T-cell (primary cell): ENCODE measurements at regions of chr2 and their contacts with region 1.

Region 1: DNA sequence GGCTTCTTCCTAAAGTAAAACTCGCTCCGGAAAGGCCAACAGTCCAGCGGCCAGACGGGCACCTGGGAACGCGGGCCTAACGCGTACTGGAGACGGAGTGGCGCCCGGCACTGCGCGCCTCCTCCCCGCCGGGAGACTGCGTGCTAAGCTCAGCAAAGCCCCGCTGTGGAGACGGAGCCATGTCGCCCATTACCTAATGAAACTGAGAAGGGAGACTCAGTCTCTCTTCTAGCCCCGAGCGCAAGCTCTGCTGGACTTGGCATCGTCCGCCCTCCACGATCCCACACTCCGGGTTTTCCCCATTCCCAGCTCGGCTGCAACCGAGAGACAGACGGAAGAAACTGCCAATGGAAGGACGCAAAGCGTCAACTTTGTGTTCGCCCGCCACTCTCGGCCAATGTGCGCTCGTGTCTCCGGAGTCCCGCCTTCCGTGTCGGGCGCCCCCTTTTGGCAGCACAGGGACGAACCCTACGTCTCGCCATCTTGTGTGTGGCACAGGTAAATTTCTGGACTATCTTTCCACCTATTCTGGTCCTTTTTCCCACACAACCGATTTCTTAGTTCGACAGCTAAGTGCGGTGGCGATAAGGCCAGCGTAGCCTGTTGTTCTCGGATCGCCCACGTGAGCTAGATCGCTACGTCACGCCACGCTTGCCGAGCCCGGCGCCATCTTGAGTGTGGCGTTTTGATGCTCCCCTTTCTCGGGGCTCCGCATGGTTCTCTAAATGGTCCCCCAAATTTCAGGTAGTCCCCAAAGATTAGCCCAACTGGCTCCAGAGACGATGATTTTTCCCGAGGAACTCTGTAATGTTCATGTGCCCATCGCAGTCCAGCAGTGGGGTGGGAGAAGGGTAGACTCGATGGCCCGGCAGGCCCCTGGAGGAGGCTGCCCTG is 1.3 kb upstream of the PTMA start:
- DNase-seq: peak; percentile 92 to 98 (median 96)
- ATAC-seq: peak; percentile 47 to 56 (median 50)
- H3K4me3 ChIP-seq: peak overlapping the region; percentile 76 to 95
- H3K4me3 Mint-ChIP-seq: peak overlapping the region; percentile 92
- H3K27ac ChIP-seq: peak overlapping the region; percentile 100
- H3K27ac Mint-ChIP-seq: peak overlapping the region; percentile 100
- H3K4me1 ChIP-seq: peaks cover 11 to 38% of the 10 kb centered on the region in 2 experiments
- H3K4me1 Mint-ChIP-seq: peaks cover 23 to 30% (median 27%) of the 10 kb centered on the region in 3 donors
- H3K27me3 ChIP-seq: no peaks in the 10 kb centered on the region
- H3K27me3 Mint-ChIP-seq: no peaks in the 10 kb centered on the region

Region 2: DNA sequence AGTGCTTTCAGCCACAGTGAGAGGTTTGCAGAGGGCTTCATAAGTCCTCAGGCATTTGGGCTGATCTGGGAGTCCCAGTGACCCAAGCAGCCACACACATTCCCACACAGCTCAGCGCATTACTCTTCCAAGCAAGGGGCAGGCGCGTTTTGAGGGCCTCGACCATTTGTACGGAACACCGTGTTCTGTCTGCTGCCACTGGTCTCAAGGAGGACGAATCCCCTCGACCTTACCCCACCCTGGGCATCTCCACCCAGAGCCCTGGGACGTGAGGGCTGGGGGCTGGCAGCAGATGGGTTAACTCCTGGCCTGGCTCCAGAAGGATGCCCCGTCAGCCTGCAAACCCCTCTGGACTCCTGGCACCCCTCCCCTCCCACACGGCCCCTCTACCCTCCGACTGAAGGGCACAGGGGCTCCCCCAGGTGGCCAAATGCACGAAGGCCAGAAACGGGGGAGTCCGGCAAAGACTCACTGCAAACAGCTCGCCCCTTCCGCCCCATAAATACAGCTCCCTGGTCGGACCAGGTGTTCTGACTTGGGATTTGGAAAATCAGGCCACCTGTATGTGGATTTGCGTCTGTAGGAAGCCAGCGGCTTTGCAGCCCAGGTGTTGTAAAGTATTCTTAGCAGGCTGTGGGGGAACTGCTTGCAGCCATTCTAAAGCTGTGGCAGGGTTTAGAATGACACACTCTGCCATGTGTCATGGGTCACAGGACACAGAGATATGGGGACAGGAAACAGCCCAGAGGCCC is 32.2 kb before region 1 on chr2:
- CTCF ChIA-PET with region 1: interaction called, 91 to 150 read pairs
- POLR2A ChIA-PET with region 1: interaction called in 1 of 2 experiments, 3 read pairs
- DNase-seq: peak in 30 of 35 experiments; percentile 8 to 66 (median 36)
- ATAC-seq: peak; percentile 65 to 71 (median 68)
- H3K4me3 ChIP-seq: no peak overlapping the region
- H3K4me3 Mint-ChIP-seq: no peak overlapping the region
- H3K27ac ChIP-seq: no peak overlapping the region
- H3K27ac Mint-ChIP-seq: no peak overlapping the region
- H3K4me1 ChIP-seq: peaks cover 2 to 12% of the 10 kb centered on the region in 2 experiments
- H3K4me1 Mint-ChIP-seq: peaks cover 6 to 8% (median 8%) of the 10 kb centered on the region in 3 donors
- H3K27me3 ChIP-seq: peaks cover 0 to 39% of the 10 kb centered on the region in 2 experiments
- H3K27me3 Mint-ChIP-seq: peaks cover 0 to 4% of the 10 kb centered on the region in 2 donors

Region 3: DNA sequence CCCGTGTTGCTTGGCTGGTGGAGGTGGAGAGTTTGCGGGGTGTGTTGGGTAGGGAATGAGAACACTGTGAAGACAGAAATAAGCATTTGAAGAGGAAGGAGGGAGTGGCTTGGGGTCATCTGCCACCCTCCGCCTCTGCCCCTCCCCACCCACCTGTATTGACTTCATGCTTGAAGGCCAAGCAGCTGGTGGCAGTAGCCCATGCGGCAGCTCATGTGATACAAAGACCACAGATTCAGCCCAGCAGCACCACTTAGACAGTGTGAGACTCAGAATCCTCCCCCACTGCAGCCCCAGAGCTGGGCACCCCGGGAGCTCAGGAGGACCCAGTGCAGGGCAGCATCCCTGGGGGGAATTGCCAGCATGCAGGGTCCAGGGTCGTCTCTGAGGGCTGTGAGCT is 203.8 kb after region 1 on chr2:
- CTCF ChIA-PET with region 1: no interaction called
- POLR2A ChIA-PET with region 1: no interaction called
- DNase-seq: no peak
- ATAC-seq: no peak
- H3K4me3 ChIP-seq: no peak overlapping the region
- H3K4me3 Mint-ChIP-seq: no peak overlapping the region
- H3K27ac ChIP-seq: no peak overlapping the region
- H3K27ac Mint-ChIP-seq: no peak overlapping the region
- H3K4me1 ChIP-seq: peaks cover 5 to 11% of the 10 kb centered on the region in 2 experiments
- H3K4me1 Mint-ChIP-seq: peaks cover 12 to 16% (median 12%) of the 10 kb centered on the region in 3 donors
- H3K27me3 ChIP-seq: peaks cover 0 to 9% of the 10 kb centered on the region in 2 experiments
- H3K27me3 Mint-ChIP-seq: no peaks in the 10 kb centered on the region